Activated CD4-positive, alpha-beta memory T cell treated with anti-CD3 and anti-CD28 coated beads for 36 hours (primary cell): ENCODE measurements at regions of chr3 and their contacts with region 1.

Region 1: GRCh38 chr3:118884748-118885206 is 149.9 kb downstream of the IGSF11 start:
- DNase-seq: peak; percentile 84
- H3K4me3 Mint-ChIP-seq: no peak overlapping the region
- H3K27ac Mint-ChIP-seq: no peak overlapping the region
- H3K4me1 Mint-ChIP-seq: no peaks in the 10 kb centered on the region
- H3K27me3 Mint-ChIP-seq: peaks cover 7% of the 10 kb centered on the region

Region 2: DNA sequence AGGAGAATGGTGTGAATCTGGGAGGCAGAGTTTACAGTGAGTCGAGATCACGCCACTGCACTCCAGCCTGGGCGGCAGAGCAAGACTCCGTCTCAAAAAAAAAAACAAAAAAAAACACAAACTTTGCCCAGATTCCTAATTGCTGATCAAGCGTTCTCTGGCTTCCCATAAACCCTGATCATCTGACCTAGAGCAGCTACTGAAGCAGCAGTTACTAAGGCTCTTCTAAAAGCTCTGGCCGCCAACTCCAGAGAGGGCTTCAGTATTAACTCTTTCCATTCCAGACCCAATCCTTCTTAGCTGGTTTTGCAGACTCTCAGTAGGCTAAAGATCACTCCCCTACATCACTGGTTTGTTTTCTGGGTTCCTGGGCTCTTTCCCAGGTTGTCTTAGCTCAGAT is 51.7 kb before region 1 on chr3:
- CTCF ChIA-PET with region 1: no interaction called
- POLR2A ChIA-PET with region 1: no interaction called
- intact Hi-C with region 1: no loop called
- DNase-seq: no peak
- H3K4me3 Mint-ChIP-seq: no peak overlapping the region
- H3K27ac Mint-ChIP-seq: no peak overlapping the region
- H3K4me1 Mint-ChIP-seq: no peaks in the 10 kb centered on the region
- H3K27me3 Mint-ChIP-seq: peaks cover 7% of the 10 kb centered on the region

Region 3: DNA sequence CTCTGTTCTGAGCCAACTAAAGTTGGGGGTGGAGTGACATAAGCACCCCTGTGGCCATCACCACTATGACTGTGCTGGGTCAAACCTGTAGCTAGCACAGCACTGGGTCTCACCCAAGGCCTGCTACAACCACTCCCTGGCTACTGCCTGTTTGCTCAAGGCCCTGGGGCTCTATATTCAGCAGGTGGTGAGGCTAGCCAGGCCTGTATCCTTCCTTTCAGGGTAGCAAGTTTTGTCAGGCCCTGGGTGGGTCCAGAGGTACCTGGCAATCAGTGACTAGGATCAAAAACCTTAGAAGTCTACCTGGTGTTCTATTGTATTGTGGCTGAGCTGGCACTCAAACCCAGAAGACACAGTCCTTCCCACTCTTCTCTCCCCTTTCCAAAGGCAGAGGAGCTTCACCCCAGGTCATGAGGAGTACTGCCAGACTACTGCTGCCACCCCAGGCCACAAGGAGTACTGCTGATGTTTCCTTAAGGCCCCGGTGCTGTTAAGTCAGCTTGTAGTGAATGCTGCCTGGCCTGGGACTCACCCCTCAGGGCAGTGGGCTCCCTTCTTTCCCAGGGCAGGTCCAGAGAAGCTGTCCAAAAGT is 20.9 kb before region 1 on chr3:
- CTCF ChIA-PET with region 1: interaction called, 34 read pairs
- POLR2A ChIA-PET with region 1: no interaction called
- intact Hi-C with region 1: no loop called
- DNase-seq: peak; percentile 12
- H3K4me3 Mint-ChIP-seq: no peak overlapping the region
- H3K27ac Mint-ChIP-seq: no peak overlapping the region
- H3K4me1 Mint-ChIP-seq: no peaks in the 10 kb centered on the region
- H3K27me3 Mint-ChIP-seq: peaks cover 7% of the 10 kb centered on the region

Region 4: GRCh38 chr3:118955914-118956556 is 71.3 kb after region 1 on chr3:
- CTCF ChIA-PET with region 1: interaction called, 22 read pairs
- POLR2A ChIA-PET with region 1: no interaction called
- intact Hi-C with region 1: no loop called
- DNase-seq: no peak
- H3K4me3 Mint-ChIP-seq: no peak overlapping the region
- H3K27ac Mint-ChIP-seq: peak overlapping the region; percentile 55
- H3K4me1 Mint-ChIP-seq: peaks cover 33% of the 10 kb centered on the region
- H3K27me3 Mint-ChIP-seq: no peaks in the 10 kb centered on the region

Region 5: GRCh38 chr3:119042164-119042563 is 157.4 kb after region 1 on chr3:
- CTCF ChIA-PET with region 1: interaction called, 363 read pairs
- POLR2A ChIA-PET with region 1: no interaction called
- intact Hi-C with region 1: no loop called
- DNase-seq: no peak
- H3K4me3 Mint-ChIP-seq: no peak overlapping the region
- H3K27ac Mint-ChIP-seq: no peak overlapping the region
- H3K4me1 Mint-ChIP-seq: no peaks in the 10 kb centered on the region
- H3K27me3 Mint-ChIP-seq: peaks cover 21% of the 10 kb centered on the region

Region 6: DNA sequence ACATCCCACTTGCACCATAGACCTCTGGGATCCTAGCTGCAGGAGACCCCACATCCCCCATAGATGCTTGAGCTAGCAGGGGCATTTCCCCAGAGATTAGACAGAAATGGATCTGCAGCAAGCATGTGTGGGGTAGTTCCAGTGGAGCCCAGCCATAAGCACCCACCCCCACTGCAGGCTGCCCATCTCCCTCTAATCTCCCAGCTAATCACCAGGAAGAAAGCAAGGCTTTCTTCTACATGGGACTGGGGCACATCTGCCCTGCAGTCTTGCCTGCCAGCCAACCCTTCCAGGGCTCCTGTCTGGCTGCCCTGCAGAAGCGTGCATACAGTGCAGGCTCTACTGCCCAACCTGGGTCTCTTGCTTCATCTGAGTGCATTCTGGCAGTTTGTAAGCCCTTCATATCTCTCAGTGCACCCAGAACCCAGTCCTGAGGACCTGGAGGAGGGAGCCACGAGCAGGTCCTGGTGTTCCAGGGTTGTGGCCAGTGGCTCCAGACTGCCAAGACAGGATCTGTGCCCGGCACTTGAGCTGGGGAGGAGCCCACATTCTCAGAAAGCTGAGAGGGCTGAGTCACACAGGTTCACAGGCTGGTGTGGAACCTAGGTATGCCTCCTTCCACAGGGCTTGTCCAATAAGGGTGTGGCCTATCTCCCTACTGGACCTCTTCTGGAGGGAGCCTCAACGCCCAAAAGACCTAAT is 199.7 kb after region 1 on chr3:
- CTCF ChIA-PET with region 1: interaction called, 366 read pairs
- POLR2A ChIA-PET with region 1: no interaction called
- intact Hi-C with region 1: no loop called
- DNase-seq: no peak
- H3K4me3 Mint-ChIP-seq: no peak overlapping the region
- H3K27ac Mint-ChIP-seq: no peak overlapping the region
- H3K4me1 Mint-ChIP-seq: no peaks in the 10 kb centered on the region
- H3K27me3 Mint-ChIP-seq: peaks cover 5% of the 10 kb centered on the region

Region 7: GRCh38 chr3:119104031-119104430 is 219.3 kb after region 1 on chr3:
- CTCF ChIA-PET with region 1: interaction called, 366 read pairs
- POLR2A ChIA-PET with region 1: interaction called, 3 read pairs
- intact Hi-C with region 1: no loop called
- DNase-seq: no peak
- H3K4me3 Mint-ChIP-seq: no peak overlapping the region
- H3K27ac Mint-ChIP-seq: no peak overlapping the region
- H3K4me1 Mint-ChIP-seq: no peaks in the 10 kb centered on the region
- H3K27me3 Mint-ChIP-seq: no peaks in the 10 kb centered on the region

Region 8: GRCh38 chr3:119352849-119353502 is 468.2 kb after region 1 on chr3:
- CTCF ChIA-PET with region 1: interaction called, 7 read pairs
- POLR2A ChIA-PET with region 1: no interaction called
- intact Hi-C with region 1: loop called (anchors 2 kb)
- DNase-seq: no peak
- H3K4me3 Mint-ChIP-seq: no peak overlapping the region
- H3K27ac Mint-ChIP-seq: no peak overlapping the region
- H3K4me1 Mint-ChIP-seq: peaks cover 30% of the 10 kb centered on the region
- H3K27me3 Mint-ChIP-seq: no peaks in the 10 kb centered on the region